A549 (cell line): ENCODE measurements at regions of chr3 and their contacts with region 1.

Region 1: GRCh38 chr3:98962189-98962930 is 60.9 kb upstream of the DCBLD2 start:
- DNase-seq: peak; percentile 81 to 85
- ATAC-seq: peak; percentile 87 to 88
- H3K4me3 ChIP-seq: no peak overlapping the region; the same call in 2 of the 3 replicates
- H3K27ac ChIP-seq: peak overlapping the region; percentile 96 to 97
- H3K4me1 ChIP-seq: peaks cover 68% of the 10 kb centered on the region
- CTCF ChIP-seq: no peak
- EP300 ChIP-seq: peak; percentile 42 to 75; a peak in 1 of 5 replicates
- POLR2A ChIP-seq: no peak
- RAD21 ChIP-seq: peak in 1 of 2 experiments; percentile 8; a peak in 3 of 5 replicates

Region 2: DNA sequence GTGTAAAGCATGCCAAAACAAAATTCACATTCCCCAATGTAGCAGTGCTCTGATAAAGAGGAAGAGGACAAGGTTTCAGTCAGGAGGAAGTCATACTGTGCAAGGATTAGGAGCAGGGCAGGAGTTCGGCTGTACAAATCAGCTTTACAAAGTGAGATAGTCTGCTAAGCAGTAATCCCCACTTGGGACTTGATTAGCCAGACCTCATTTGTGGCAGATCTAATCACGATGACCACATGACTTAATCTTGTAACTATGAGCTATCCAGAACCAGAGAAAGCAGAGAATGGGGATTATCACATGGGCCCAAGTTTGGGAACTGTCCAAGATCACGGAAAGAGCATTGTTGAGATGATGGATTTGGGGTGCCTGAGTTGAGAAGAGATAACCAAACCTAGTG is 68.6 kb before region 1 on chr3:
- CTCF ChIA-PET with region 1: interaction called, 3 read pairs
- POLR2A ChIA-PET with region 1: interaction called, 10 read pairs
- DNase-seq: no peak
- ATAC-seq: peak; percentile 5 to 33; a peak in 3 of 6 replicates
- H3K4me3 ChIP-seq: peak overlapping the region; percentile 93
- H3K27ac ChIP-seq: peak overlapping the region; percentile 86 to 95
- H3K4me1 ChIP-seq: peaks cover 76% of the 10 kb centered on the region
- CTCF ChIP-seq: no peak
- EP300 ChIP-seq: no peak
- POLR2A ChIP-seq: no peak
- RAD21 ChIP-seq: no peak

Region 3: DNA sequence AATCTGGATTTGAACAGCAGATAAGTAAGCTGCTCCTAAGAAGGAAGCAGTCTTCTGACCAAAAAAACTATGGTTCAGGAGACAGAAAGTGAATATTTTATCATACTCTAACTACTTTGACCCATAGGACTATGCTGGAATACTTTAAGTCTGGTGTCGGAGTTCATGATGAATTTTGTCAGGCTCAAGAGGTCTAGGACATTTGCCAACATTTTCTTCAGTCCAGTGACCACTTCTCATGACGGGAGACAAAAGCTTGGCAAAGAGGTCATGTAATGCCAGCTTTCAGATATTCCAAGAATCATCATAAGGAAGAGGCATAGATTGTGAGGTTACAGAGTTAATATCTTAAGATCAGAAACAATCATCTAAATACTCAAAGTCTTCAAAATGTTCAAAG is 40.4 kb before region 1 on chr3:
- CTCF ChIA-PET with region 1: interaction called, 3 read pairs
- POLR2A ChIA-PET with region 1: interaction called, 17 read pairs
- DNase-seq: no peak
- ATAC-seq: no peak
- H3K4me3 ChIP-seq: no peak overlapping the region
- H3K27ac ChIP-seq: peak overlapping the region; percentile 95 to 99
- H3K4me1 ChIP-seq: peaks cover 75% of the 10 kb centered on the region
- CTCF ChIP-seq: no peak
- EP300 ChIP-seq: no peak
- POLR2A ChIP-seq: no peak
- RAD21 ChIP-seq: no peak

Region 4: DNA sequence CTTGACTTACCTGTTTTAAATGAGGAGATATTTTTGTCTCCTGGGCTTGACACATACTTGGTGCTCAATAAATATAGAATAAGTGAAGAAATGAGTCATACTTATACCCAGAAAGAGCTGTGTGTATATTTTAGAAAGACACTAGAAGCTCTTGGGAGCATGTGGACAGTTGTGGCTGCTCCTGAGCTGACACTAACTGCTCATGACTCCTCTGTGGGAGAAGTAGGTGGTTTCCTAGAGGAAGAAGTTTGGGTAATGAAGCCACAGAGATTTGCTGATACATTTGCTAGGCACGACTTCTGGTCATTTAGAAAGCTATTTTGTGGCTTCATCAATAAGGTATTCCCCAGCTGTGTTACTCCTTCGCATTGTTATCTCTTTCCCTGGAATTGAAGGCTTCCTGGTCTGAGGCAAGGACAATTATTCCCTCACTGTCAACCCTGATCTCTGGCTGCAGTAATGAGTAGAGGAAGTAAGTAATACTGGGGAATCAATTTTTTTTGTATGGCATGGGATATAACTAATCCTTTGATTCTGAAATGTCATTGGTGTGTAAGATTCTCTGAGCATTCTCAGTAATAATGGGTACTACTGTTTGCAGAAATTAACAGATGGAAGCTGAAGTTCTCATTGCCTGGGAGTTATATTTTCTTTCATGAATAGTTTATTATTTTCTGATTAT is 18.7 kb after region 1 on chr3:
- CTCF ChIA-PET with region 1: interaction called, 4 read pairs
- POLR2A ChIA-PET with region 1: interaction called, 15 read pairs
- DNase-seq: peak in 1 of 2 experiments; percentile 51
- ATAC-seq: peak; percentile 31 to 57; a peak in 4 of 6 replicates
- H3K4me3 ChIP-seq: peak overlapping the region; percentile 44
- H3K27ac ChIP-seq: peak overlapping the region; percentile 86
- H3K4me1 ChIP-seq: peaks cover 80% of the 10 kb centered on the region
- CTCF ChIP-seq: no peak
- EP300 ChIP-seq: no peak
- POLR2A ChIP-seq: no peak
- RAD21 ChIP-seq: no peak

Region 5: GRCh38 chr3:99031778-99032177 is 69.4 kb after region 1 on chr3:
- CTCF ChIA-PET with region 1: no interaction called
- POLR2A ChIA-PET with region 1: no interaction called
- DNase-seq: no peak
- ATAC-seq: no peak
- H3K4me3 ChIP-seq: no peak overlapping the region
- H3K27ac ChIP-seq: no peak overlapping the region
- H3K4me1 ChIP-seq: no peaks in the 10 kb centered on the region
- CTCF ChIP-seq: no peak
- EP300 ChIP-seq: no peak
- POLR2A ChIP-seq: no peak
- RAD21 ChIP-seq: no peak